Activated CD8-positive, alpha-beta T cell treated with anti-CD3 and anti-CD28 coated beads, Interleukin-2, amount 10 ng/mL, durations not matched to agents 7 days and 5 days (primary cell): ENCODE measurements at regions of chr10 and their contacts with region 1.

Region 1: GRCh38 chr10:59830601-59831259 is 75.6 kb downstream of the CCDC6 start:
- DNase-seq: peak; percentile 37
- ATAC-seq: no peak
- H3K4me3 Mint-ChIP-seq: no peak overlapping the region
- H3K27ac Mint-ChIP-seq: no peak overlapping the region
- H3K4me1 Mint-ChIP-seq: peaks cover 19% of the 10 kb centered on the region
- H3K27me3 Mint-ChIP-seq: no peaks in the 10 kb centered on the region

Region 2: GRCh38 chr10:59625721-59626522 is 204.8 kb before region 1 on chr10:
- CTCF ChIA-PET with region 1: interaction called, 33 read pairs
- POLR2A ChIA-PET with region 1: no interaction called
- DNase-seq: peak; percentile 56
- ATAC-seq: peak; percentile 91
- H3K4me3 Mint-ChIP-seq: no peak overlapping the region
- H3K27ac Mint-ChIP-seq: no peak overlapping the region
- H3K4me1 Mint-ChIP-seq: no peaks in the 10 kb centered on the region
- H3K27me3 Mint-ChIP-seq: peaks cover 2% of the 10 kb centered on the region

Region 3: DNA sequence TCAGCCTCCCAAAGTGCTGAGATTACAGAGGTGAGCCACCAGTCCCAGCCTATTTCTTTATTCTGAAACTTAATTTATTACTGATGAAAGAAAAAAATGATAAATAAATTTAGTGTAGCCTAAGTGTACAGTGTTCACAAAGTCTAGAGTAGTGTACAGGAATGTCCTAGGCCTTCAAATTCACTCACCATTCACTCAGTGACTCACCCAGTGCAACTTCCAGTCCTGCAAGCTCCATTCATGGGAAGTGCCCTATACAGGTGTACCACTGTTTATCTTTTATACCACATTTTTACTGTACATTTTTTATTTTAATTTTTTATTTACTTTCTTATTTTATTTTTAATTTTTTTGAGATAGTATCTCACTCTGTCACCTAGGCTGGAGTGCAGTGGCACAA is 89.7 kb before region 1 on chr10:
- CTCF ChIA-PET with region 1: no interaction called
- POLR2A ChIA-PET with region 1: no interaction called
- DNase-seq: no peak
- ATAC-seq: no peak
- H3K4me3 Mint-ChIP-seq: no peak overlapping the region
- H3K27ac Mint-ChIP-seq: no peak overlapping the region
- H3K4me1 Mint-ChIP-seq: no peaks in the 10 kb centered on the region
- H3K27me3 Mint-ChIP-seq: peaks cover 4% of the 10 kb centered on the region

Region 4: DNA sequence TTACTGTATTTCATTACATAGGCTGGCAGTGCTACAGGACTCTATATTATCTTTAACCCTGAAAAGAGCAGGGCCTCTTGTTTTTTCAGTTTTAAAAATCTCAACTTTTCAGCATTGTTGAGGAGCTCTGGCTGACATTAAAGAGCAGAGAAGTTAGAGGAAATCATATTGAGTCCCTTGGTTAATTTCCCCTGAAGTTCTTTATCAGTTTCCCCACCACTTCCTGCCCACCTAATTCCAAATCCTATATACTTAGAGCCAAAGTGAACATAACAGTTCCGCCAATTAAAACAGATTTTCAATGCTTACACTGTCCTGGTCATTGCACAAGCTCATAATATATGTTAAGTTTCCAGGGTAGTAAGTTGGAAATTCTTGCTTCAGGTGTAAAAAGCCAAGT is 11.5 kb before region 1 on chr10:
- CTCF ChIA-PET with region 1: interaction called, 12 read pairs
- POLR2A ChIA-PET with region 1: no interaction called
- DNase-seq: no peak
- ATAC-seq: no peak
- H3K4me3 Mint-ChIP-seq: no peak overlapping the region
- H3K27ac Mint-ChIP-seq: no peak overlapping the region
- H3K4me1 Mint-ChIP-seq: peaks cover 9% of the 10 kb centered on the region
- H3K27me3 Mint-ChIP-seq: no peaks in the 10 kb centered on the region